A549 (cell line): ENCODE measurements at regions of chr11 and their contacts with region 1.

Region 1: DNA sequence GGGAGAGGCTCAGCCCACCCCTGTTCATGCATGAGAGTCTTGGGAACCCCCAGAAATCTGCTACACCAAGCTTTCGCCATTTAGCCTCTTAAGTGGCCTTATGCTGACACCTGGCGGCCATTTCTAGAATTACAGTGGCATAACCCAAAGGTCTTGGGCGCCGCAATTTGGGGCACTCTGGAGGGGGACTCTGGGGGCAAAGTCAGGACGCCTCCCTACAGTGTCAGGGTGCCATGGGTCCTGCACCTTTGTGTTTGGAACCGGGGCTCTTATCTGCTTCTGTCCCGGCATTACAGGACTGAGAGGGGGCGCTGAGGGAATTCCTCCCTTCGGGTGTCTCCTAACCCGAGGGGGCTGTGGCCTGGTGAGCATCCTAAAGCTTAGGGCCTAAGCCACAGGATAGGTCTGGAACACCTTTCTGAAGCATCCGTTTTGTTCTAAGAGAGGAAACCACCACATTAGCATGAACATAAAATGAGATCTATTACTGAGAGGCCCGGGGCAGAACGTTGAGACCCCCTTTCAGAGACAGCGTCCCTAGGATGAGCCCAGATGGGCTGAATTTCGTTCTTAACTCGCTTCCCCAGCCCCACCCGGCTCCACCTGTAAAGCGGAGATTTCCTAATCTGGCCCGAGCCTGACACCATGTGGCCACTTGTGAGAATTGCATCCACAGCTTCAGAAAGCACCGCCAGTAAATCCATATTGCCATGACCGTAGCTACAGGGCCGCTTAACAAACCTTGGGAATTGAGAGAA is 9.3 kb downstream of the INS start:
- DNase-seq: peak; percentile 85 to 90
- ATAC-seq: peak; percentile 33 to 53; a peak in 5 of 6 replicates
- H3K4me3 ChIP-seq: no peak overlapping the region
- H3K27ac ChIP-seq: peak overlapping the region; percentile 9 to 63; a peak in 4 of 6 replicates
- H3K4me1 ChIP-seq: no peaks in the 10 kb centered on the region
- CTCF ChIP-seq: peak; percentile 64
- EP300 ChIP-seq: no peak
- POLR2A ChIP-seq: no peak
- RAD21 ChIP-seq: peak; percentile 78 to 89

Region 2: GRCh38 chr11:1640076-1640946 is 511.4 kb before region 1 on chr11:
- CTCF ChIA-PET with region 1: interaction called, 30 read pairs
- POLR2A ChIA-PET with region 1: no interaction called
- DNase-seq: peak; percentile 50 to 74
- ATAC-seq: peak; percentile 71 to 95
- H3K4me3 ChIP-seq: no peak overlapping the region
- H3K27ac ChIP-seq: no peak overlapping the region
- H3K4me1 ChIP-seq: no peaks in the 10 kb centered on the region
- CTCF ChIP-seq: peak; percentile 73
- EP300 ChIP-seq: no peak
- POLR2A ChIP-seq: no peak
- RAD21 ChIP-seq: peak; percentile 18; a peak in 1 of 5 replicates

Region 3: DNA sequence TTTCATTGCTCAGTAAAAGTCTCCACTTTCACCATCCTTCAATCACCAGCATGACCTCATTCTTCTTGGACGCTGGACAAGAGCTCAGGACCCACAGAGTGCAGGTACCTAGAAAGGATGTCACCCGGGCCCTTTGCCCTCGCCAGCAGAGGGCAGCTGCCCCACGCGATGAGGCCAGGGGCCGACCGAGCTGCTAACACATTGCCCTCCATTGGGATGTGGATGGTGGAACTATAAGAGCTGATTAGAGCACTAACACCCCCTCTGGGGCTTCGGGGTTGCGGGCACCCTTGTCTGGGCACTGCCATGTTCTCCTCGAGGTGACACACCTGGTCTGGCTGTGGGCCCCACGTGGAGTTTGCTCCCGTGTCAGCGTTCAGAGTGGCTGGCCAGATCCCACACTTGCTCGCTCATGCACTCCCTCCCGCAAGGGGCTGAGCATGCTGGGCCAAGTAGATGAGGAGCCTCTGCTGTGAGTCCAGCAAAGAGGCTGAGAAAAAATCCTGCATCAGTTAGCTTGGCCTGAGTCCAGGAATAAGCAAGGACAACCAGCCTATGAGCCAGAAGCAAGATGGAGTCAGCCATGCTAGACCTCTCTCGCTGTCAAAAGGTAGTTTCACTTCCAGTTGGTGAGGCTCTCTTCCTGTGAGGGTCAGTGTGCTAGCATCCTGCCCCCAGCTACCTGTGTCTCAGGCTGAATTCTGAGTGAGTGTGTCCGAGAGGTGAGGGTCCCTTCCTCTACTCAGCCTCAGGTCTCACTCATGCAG is 444.9 kb before region 1 on chr11:
- CTCF ChIA-PET with region 1: interaction called, 15 read pairs
- POLR2A ChIA-PET with region 1: no interaction called
- DNase-seq: peak; percentile 38 to 67
- ATAC-seq: peak; percentile 77 to 97
- H3K4me3 ChIP-seq: no peak overlapping the region
- H3K27ac ChIP-seq: no peak overlapping the region
- H3K4me1 ChIP-seq: peaks cover 3% of the 10 kb centered on the region; the same call in 1 of the 3 replicates
- CTCF ChIP-seq: peak; percentile 51
- EP300 ChIP-seq: no peak
- POLR2A ChIP-seq: no peak
- RAD21 ChIP-seq: peak; percentile 74 to 82

Region 4: GRCh38 chr11:1852877-1853276 is 298.8 kb before region 1 on chr11 and contains the start of gene LSP1:
- CTCF ChIA-PET with region 1: interaction called, 60 read pairs
- POLR2A ChIA-PET with region 1: no interaction called
- DNase-seq: no peak
- ATAC-seq: no peak
- H3K4me3 ChIP-seq: no peak within 1 kb of the TSS
- H3K27ac ChIP-seq: no peak within 1 kb of the TSS
- H3K4me1 ChIP-seq: no peaks in the 10 kb centered on the region
- CTCF ChIP-seq: no peak
- EP300 ChIP-seq: no peak
- POLR2A ChIP-seq: no peak
- RAD21 ChIP-seq: no peak
- polyA plus RNA-seq, gene LSP1: 0.42 and 0.67 TPM in 2 replicates

Region 5: DNA sequence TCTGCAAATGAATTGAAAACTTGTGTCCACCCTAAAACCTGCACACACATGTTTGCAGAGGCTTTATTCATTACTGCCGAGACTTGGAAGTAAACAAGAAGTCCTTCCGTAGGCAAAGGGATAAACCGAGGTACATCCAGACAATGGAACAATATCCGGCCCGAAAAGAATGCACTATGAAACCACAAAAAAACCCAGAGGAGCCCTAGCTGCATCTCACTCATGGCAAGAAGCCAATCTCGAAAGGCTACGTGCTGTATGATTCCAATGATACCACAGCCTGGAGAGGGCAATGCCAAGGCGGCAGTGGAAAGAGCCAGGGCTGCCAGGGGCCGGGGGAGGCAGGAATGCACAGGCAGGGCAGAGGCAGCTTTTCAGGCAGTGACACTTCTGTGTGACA is 207.7 kb before region 1 on chr11:
- CTCF ChIA-PET with region 1: interaction called, 554 read pairs
- POLR2A ChIA-PET with region 1: interaction called, 5 read pairs
- DNase-seq: no peak
- ATAC-seq: no peak; a peak in 1 of 6 replicates
- H3K4me3 ChIP-seq: no peak overlapping the region
- H3K27ac ChIP-seq: no peak overlapping the region
- H3K4me1 ChIP-seq: no peaks in the 10 kb centered on the region
- CTCF ChIP-seq: no peak
- EP300 ChIP-seq: no peak
- POLR2A ChIP-seq: no peak
- RAD21 ChIP-seq: no peak

Region 6: DNA sequence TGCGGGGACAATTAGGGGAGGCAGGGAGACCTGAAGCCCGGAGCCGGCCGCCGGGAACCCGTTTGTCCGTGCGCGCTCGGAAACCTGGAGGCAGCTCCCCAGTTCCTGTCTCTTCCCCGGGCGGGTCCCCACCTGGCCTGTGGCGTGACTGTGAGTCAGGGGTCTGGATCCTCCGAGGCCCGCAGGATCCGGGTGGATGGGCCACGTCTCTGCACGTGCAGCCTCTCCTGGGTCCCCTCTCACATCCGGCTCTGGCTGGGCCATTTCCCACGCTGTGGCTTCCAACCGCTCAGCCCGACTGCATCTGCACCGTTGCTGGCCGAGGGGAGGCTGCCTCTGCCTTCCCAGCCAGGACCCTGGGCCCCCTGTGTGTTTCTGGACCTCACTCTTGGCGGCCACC is 139.2 kb before region 1 on chr11:
- CTCF ChIA-PET with region 1: interaction called, 31 read pairs
- POLR2A ChIA-PET with region 1: no interaction called
- DNase-seq: no peak
- ATAC-seq: no peak
- H3K4me3 ChIP-seq: no peak overlapping the region
- H3K27ac ChIP-seq: no peak overlapping the region
- H3K4me1 ChIP-seq: no peaks in the 10 kb centered on the region
- CTCF ChIP-seq: no peak
- EP300 ChIP-seq: no peak
- POLR2A ChIP-seq: no peak
- RAD21 ChIP-seq: no peak

Region 7: GRCh38 chr11:2114430-2115241 is 37.0 kb before region 1 on chr11:
- CTCF ChIA-PET with region 1: interaction called, 12 read pairs
- POLR2A ChIA-PET with region 1: no interaction called
- DNase-seq: no peak
- ATAC-seq: no peak
- H3K4me3 ChIP-seq: no peak overlapping the region
- H3K27ac ChIP-seq: no peak overlapping the region
- H3K4me1 ChIP-seq: no peaks in the 10 kb centered on the region
- CTCF ChIP-seq: no peak
- EP300 ChIP-seq: no peak
- POLR2A ChIP-seq: no peak
- RAD21 ChIP-seq: no peak

Region 8: GRCh38 chr11:2222451-2222850 is 70.8 kb after region 1 on chr11:
- CTCF ChIA-PET with region 1: no interaction called
- POLR2A ChIA-PET with region 1: no interaction called
- DNase-seq: no peak
- ATAC-seq: no peak
- H3K4me3 ChIP-seq: no peak overlapping the region
- H3K27ac ChIP-seq: no peak overlapping the region
- H3K4me1 ChIP-seq: no peaks in the 10 kb centered on the region
- CTCF ChIP-seq: no peak
- EP300 ChIP-seq: no peak
- POLR2A ChIP-seq: no peak
- RAD21 ChIP-seq: no peak